B cell (primary cell): ENCODE measurements at regions of chr19 and their contacts with region 1.

Region 1: GRCh38 chr19:1825909-1826556 is 14.0 kb upstream of the ATP8B3 start:
- DNase-seq: peak; percentile 84
- ATAC-seq: peak; percentile 93
- H3K4me3 ChIP-seq: no peak overlapping the region
- H3K4me3 Mint-ChIP-seq: no peak overlapping the region
- H3K27ac ChIP-seq: no peak overlapping the region
- H3K27ac Mint-ChIP-seq: no peak overlapping the region
- H3K4me1 ChIP-seq: peaks cover 0 to 10% of the 10 kb centered on the region in 2 donors
- H3K4me1 Mint-ChIP-seq: peaks cover 4% of the 10 kb centered on the region
- H3K27me3 ChIP-seq: no peaks in the 10 kb centered on the region
- H3K27me3 Mint-ChIP-seq: no peaks in the 10 kb centered on the region
- CTCF ChIP-seq: peak; percentile 80

Region 2: DNA sequence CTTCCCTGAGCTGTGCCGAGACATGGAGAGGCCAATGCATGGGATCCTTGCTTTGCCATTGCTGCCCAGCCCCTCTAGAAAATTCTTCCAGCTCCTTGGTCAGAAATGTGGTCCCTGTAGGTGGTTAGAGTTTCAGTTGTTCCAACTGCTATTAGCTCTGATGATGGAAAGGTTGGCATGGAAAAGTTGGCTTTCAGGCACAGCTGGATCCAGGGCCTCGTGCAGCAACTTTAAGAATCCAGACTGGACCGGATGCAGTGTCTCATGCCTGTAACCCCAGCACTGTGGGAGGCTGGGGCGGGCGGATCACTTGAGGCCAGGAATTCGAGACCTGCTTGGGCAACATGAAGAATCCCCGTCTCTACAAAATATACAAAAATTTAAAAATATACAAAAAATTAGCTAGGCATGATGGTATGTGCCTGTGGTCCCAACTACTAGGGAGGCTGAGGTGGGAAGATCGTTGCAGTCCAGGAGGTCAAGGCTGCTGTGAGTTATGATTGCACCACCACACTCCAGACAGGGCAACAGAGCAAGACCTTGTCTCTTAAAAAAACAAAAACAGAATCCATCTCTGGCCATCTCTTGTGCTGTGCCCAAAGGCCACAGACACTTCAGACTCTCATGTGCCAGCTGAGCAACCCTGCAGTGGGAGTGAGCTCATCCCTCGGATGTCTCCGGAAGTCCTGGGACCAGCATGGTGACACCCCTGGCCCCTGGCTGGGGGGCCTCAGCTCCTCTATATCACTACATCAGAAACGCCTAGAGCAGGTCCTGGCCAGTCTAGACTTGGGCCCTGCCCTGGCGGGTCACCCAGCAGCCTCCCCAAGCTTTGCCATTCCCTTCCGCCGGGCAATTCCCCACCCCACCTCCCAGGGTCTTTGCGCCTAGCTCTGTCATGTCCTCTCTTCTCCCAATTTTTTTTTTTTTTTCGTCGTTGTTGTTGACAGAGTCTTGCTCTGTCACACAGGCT is 274.7 kb before region 1 on chr19:
- CTCF ChIA-PET with region 1: interaction called, 41 read pairs
- POLR2A ChIA-PET with region 1: no interaction called
- intact Hi-C with region 1: loop called (anchors 1 kb)
- DNase-seq: no peak
- ATAC-seq: no peak
- H3K4me3 ChIP-seq: no peak overlapping the region
- H3K4me3 Mint-ChIP-seq: no peak overlapping the region
- H3K27ac ChIP-seq: no peak overlapping the region
- H3K27ac Mint-ChIP-seq: no peak overlapping the region
- H3K4me1 ChIP-seq: peaks cover 0 to 2% of the 10 kb centered on the region in 2 donors
- H3K4me1 Mint-ChIP-seq: no peaks in the 10 kb centered on the region
- H3K27me3 ChIP-seq: peaks cover 0 to 21% (median 0%) of the 10 kb centered on the region in 4 experiments
- H3K27me3 Mint-ChIP-seq: peaks cover 16% of the 10 kb centered on the region
- CTCF ChIP-seq: no peak

Region 3: DNA sequence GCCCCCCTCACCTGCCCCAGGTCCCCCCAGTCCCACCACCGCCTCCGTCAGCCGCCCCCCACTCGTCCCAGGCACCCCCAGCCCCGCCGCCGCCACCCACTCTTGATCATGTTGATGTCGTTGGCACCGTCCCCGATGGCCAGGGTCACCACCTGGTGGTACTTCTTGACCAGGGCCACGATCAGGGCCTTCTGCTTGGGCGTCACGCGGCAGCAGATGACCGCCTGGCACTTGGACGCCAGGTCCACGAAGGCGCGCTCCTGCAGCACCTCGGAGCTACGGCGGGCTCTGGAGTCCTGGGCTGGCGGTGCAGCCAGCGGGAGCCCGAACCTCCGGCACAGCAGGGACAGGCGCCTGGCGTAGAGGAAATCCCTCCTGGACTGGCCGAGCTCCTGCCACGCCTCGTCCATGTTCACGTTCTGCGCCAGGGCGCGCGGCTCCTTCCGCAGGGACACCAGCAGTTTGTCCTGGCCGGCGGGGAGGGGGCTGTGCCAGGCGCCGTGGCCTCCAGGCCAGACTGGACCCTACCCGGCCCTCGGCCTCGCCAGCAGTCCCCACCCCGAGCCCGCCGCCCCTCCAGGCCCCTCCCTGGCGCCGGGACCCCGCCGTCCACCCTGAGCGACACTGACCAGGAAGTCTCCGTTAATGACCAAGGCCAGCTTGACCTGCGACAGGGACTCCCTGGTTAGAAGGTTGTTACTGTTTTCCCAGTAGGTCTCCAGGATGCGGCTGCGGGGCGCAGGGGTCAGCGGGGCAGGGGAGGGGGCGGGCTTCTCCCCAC is 36.6 kb before region 1 on chr19:
- CTCF ChIA-PET with region 1: interaction called, 5 read pairs
- POLR2A ChIA-PET with region 1: interaction called, 3 read pairs
- intact Hi-C with region 1: loop called (anchors 2 kb)
- DNase-seq: no peak
- ATAC-seq: no peak
- H3K4me3 ChIP-seq: no peak overlapping the region
- H3K4me3 Mint-ChIP-seq: no peak overlapping the region
- H3K27ac ChIP-seq: no peak overlapping the region
- H3K27ac Mint-ChIP-seq: no peak overlapping the region
- H3K4me1 ChIP-seq: peaks cover 0 to 3% of the 10 kb centered on the region in 2 donors
- H3K4me1 Mint-ChIP-seq: no peaks in the 10 kb centered on the region
- H3K27me3 ChIP-seq: peaks cover 0 to 39% (median 2%) of the 10 kb centered on the region in 4 experiments
- H3K27me3 Mint-ChIP-seq: peaks cover 8% of the 10 kb centered on the region
- CTCF ChIP-seq: no peak

Region 4: GRCh38 chr19:1837625-1838105 is 11.6 kb after region 1 on chr19:
- CTCF ChIA-PET with region 1: interaction called, 57 read pairs
- POLR2A ChIA-PET with region 1: no interaction called
- intact Hi-C with region 1: no loop called
- DNase-seq: peak; percentile 66
- ATAC-seq: peak; percentile 85
- H3K4me3 ChIP-seq: no peak overlapping the region
- H3K4me3 Mint-ChIP-seq: no peak overlapping the region
- H3K27ac ChIP-seq: no peak overlapping the region
- H3K27ac Mint-ChIP-seq: no peak overlapping the region
- H3K4me1 ChIP-seq: peaks cover 11 to 12% of the 10 kb centered on the region in 2 donors
- H3K4me1 Mint-ChIP-seq: peaks cover 38% of the 10 kb centered on the region
- H3K27me3 ChIP-seq: no peaks in the 10 kb centered on the region
- H3K27me3 Mint-ChIP-seq: no peaks in the 10 kb centered on the region
- CTCF ChIP-seq: peak; percentile 92